ENCODE measurements at regions of chr20 and their contacts with region 1.

Region 1: GRCh38 chr20:58179432-58180099 is 48.9 kb downstream of the ANKRD60 start:
- DNase-seq: peak; percentile 83
- CTCF ChIP-seq: peak; percentile 92

Region 2: GRCh38 chr20:57957411-57958049 is 222.0 kb before region 1 on chr20:
- CTCF ChIA-PET with region 1: no interaction called
- POLR2A ChIA-PET with region 1: no interaction called
- DNase-seq: no peak
- CTCF ChIP-seq: no peak

Region 3: GRCh38 chr20:58135441-58136149 is 44.0 kb before region 1 on chr20:
- CTCF ChIA-PET with region 1: no interaction called
- POLR2A ChIA-PET with region 1: no interaction called
- DNase-seq: no peak
- CTCF ChIP-seq: no peak

Region 4: DNA sequence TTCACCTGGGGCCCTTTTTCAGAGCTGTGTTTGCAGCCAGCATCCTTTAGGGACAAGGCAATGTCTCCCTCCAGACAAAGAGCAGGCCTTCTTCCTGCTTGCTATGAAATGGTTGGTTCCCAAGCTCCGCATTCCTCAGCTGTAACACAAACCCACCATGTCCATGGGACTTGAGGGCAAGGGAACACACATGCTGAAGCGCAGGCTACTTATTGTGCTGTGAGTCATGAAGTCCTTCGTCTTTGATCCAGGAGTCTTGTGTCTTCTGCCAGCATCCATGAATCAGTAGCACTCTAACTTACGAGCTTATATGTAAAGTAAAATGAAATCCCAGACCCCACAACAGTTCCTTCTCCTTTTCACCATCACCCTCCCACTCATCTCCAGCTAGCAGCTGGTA is 10.1 kb before region 1 on chr20:
- CTCF ChIA-PET with region 1: interaction called, 23 read pairs
- POLR2A ChIA-PET with region 1: no interaction called
- DNase-seq: no peak
- CTCF ChIP-seq: no peak

Region 5: GRCh38 chr20:58192567-58192966 is 13.0 kb after region 1 on chr20:
- CTCF ChIA-PET with region 1: interaction called, 41 read pairs
- POLR2A ChIA-PET with region 1: no interaction called
- DNase-seq: peak; percentile 60
- CTCF ChIP-seq: peak; percentile 77

Region 6: GRCh38 chr20:58209652-58210397 is 30.3 kb after region 1 on chr20:
- CTCF ChIA-PET with region 1: interaction called, 15 read pairs
- POLR2A ChIA-PET with region 1: no interaction called
- DNase-seq: peak; percentile 93
- CTCF ChIP-seq: peak; percentile 100

Region 7: GRCh38 chr20:58361481-58362205 is 182.1 kb after region 1 on chr20:
- CTCF ChIA-PET with region 1: no interaction called
- POLR2A ChIA-PET with region 1: no interaction called
- DNase-seq: no peak
- CTCF ChIP-seq: no peak